ENCODE measurements at regions of chr4 and their contacts with region 1.

Region 1: GRCh38 chr4:25913851-25914669 is at the start of gene SMIM20:
- DNase-seq: peak; percentile 88
- H3K4me3 Mint-ChIP-seq: peak within 1 kb of the TSS; percentile 94
- H3K27ac Mint-ChIP-seq: peak within 1 kb of the TSS; percentile 99
- H3K4me1 Mint-ChIP-seq: peaks cover 24% of the 10 kb centered on the region
- H3K27me3 Mint-ChIP-seq: peaks cover 5% of the 10 kb centered on the region
- total RNA-seq, gene SMIM20: 19.2 and 21.5 TPM in 2 replicates

Region 2: DNA sequence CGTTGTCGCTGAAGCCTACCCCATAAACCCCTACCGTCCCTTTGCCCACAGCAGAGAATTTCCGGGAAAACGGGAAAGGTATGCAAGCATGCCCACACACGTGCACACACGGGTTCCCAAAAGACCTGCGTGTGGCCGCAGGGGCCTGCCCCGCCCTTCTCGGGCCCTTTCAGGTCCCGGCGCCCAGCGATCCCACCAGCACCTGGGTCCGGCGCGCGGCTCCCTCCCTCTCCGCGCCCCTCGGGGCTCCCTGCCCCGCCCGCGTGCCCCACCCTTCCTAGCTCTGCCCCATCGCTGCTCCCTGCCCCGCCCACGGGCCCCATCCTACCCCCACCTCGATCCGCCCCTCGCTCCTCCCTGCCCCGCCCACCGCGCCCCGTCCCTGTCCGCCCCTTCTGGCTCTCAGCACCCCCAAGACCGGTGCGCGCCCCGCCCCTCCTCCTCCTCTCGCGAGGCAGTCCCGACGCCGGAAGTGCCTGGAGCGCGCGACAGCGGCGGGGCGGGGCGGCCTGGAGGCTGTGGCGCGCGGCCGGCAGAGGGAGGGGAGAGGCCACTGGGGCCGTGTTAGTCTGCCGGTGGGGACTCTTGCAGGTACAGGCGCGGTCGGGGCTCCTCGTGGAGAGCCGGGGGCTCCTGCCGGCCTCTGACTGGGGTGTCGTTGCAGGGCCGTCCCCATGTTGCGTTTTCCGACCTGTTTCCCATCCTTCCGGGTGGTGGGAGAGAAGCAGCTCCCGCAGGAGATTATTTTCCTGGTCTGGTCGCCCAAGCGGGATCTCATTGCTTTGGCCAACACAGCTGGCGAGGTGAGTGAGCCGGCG is 537.1 kb before region 1 on chr4 and contains the start of gene ANAPC4:
- intact Hi-C with region 1: loop called (anchors 1 kb)
- DNase-seq: peak; percentile 95
- H3K4me3 Mint-ChIP-seq: no peak within 1 kb of the TSS
- H3K27ac Mint-ChIP-seq: peak within 1 kb of the TSS; percentile 91
- H3K4me1 Mint-ChIP-seq: no peaks in the 10 kb centered on the region
- H3K27me3 Mint-ChIP-seq: no peaks in the 10 kb centered on the region
- total RNA-seq, gene ANAPC4: 36.0 and 39.9 TPM in 2 replicates

Region 3: GRCh38 chr4:25842229-25842845 is 71.7 kb before region 1 on chr4:
- intact Hi-C with region 1: loop called (anchors 1 kb)
- DNase-seq: no peak
- H3K4me3 Mint-ChIP-seq: no peak overlapping the region
- H3K27ac Mint-ChIP-seq: peak overlapping the region; percentile 86
- H3K4me1 Mint-ChIP-seq: peaks cover 36% of the 10 kb centered on the region
- H3K27me3 Mint-ChIP-seq: no peaks in the 10 kb centered on the region

Region 4: DNA sequence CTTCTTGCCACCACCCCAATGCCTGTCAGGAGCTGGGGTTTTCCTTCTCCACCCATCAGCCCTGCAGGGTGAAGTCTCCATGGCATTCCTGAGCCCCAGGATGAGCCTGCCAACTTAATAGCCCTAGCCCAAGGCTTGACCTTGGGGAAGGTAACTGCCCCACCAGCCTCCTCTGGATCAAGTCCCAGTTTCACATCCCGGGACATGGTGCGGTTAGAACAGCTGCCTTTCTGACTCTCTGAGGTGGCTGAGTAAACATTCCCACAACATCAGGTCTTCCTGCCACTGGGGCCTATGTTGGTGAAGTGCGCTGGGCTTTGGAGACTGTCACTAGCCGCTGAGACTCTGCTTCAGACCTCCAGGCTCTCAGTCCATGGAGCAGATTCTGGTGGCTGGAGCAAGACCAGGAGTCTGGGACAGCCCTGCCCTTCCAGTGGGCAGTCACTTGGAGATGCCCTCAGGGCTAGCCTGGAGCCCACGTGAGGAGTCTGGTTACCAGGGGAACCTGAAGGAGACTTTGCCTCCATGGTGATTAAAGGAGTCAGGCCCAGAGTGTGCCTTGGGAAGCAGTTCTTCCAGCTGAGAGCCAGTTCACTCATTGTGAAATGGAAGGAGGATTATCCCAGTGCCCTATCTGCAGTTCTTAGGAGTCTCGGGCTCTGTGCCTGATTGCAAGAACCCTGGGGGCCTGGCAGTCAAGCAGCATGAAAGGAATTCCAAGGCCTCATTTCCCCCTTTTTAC is 56.8 kb after region 1 on chr4:
- intact Hi-C with region 1: no loop called
- DNase-seq: no peak
- H3K4me3 Mint-ChIP-seq: no peak overlapping the region
- H3K27ac Mint-ChIP-seq: no peak overlapping the region
- H3K4me1 Mint-ChIP-seq: peaks cover 5% of the 10 kb centered on the region
- H3K27me3 Mint-ChIP-seq: peaks cover 3% of the 10 kb centered on the region